Activated B cell treated with CpG ODN at 0.5 μM for 24 hours (primary cell): ENCODE measurements at regions of chr11 and their contacts with region 1.

Region 1: GRCh38 chr11:18698341-18699268 is at the start of gene TMEM86A:
- DNase-seq: peak; percentile 83
- ATAC-seq: peak; percentile 98
- H3K4me3 Mint-ChIP-seq: peak within 1 kb of the TSS; percentile 80
- H3K27ac Mint-ChIP-seq: no peak within 1 kb of the TSS
- H3K4me1 Mint-ChIP-seq: peaks cover 17% of the 10 kb centered on the region
- H3K27me3 Mint-ChIP-seq: peaks cover 5% of the 10 kb centered on the region
- CTCF ChIP-seq: no peak
- total RNA-seq, gene TMEM86A: 0.10 and 0.13 TPM in 2 replicates

Region 2: GRCh38 chr11:18329196-18329870 is 369.3 kb before region 1 on chr11:
- CTCF ChIA-PET with region 1: no interaction called
- POLR2A ChIA-PET with region 1: no interaction called
- intact Hi-C with region 1: no loop called
- DNase-seq: no peak
- ATAC-seq: peak; percentile 69
- H3K4me3 Mint-ChIP-seq: peak overlapping the region; percentile 4
- H3K27ac Mint-ChIP-seq: peak overlapping the region; percentile 82
- H3K4me1 Mint-ChIP-seq: peaks cover 54% of the 10 kb centered on the region
- H3K27me3 Mint-ChIP-seq: no peaks in the 10 kb centered on the region
- CTCF ChIP-seq: no peak

Region 3: GRCh38 chr11:18588297-18589252 is 110.0 kb before region 1 on chr11 and contains the start of gene UEVLD:
- CTCF ChIA-PET with region 1: no interaction called
- POLR2A ChIA-PET with region 1: no interaction called
- intact Hi-C with region 1: loop called (anchors 2 kb)
- DNase-seq: peak; percentile 65
- ATAC-seq: peak; percentile 73
- H3K4me3 Mint-ChIP-seq: no peak within 1 kb of the TSS
- H3K27ac Mint-ChIP-seq: no peak within 1 kb of the TSS
- H3K4me1 Mint-ChIP-seq: no peaks in the 10 kb centered on the region
- H3K27me3 Mint-ChIP-seq: no peaks in the 10 kb centered on the region
- CTCF ChIP-seq: no peak
- total RNA-seq, gene UEVLD: 12.9 and 18.0 TPM in 2 replicates

Region 4: DNA sequence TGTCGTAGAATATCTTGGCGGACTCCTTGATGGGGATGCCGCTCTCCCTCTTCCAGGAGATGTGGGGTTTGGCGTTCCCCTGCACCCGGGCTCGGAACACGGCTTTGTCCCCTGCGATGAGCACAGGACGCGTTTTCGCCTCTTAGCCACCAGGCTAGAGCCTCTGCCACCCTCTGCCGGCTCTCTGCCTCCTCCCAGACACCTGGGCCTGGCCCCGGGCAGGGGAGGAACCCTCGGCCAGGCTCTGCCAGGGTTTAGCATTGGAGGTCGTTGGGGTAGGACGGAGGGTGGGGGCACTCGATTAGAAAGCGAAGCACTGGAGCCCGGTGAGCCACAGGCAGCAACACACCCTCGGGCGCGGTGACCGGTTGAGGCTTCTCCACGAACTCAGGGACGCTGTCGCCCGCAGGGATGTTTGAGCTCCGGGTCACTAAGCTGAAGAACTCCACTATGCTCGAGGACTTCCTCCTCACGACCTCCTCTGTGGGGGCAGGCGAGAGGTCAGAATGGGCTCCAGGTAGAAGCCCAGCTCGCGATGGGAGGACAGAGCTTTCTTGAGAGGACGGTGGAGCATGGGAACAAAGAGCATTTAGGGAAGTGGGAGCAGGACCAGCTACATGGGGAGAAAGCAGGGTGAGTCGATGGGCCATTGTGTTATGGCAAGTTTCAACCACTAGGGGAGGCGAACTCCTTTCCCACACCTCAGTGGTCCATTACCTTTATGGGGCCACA is 23.1 kb after region 1 on chr11:
- CTCF ChIA-PET with region 1: interaction called, 16 read pairs
- POLR2A ChIA-PET with region 1: no interaction called
- intact Hi-C with region 1: loop called (anchors 1 kb)
- DNase-seq: peak; percentile 45
- ATAC-seq: peak; percentile 56
- H3K4me3 Mint-ChIP-seq: peak overlapping the region; percentile 92
- H3K27ac Mint-ChIP-seq: peak overlapping the region; percentile 46
- H3K4me1 Mint-ChIP-seq: peaks cover 12% of the 10 kb centered on the region
- H3K27me3 Mint-ChIP-seq: no peaks in the 10 kb centered on the region
- CTCF ChIP-seq: peak; percentile 39

Region 5: DNA sequence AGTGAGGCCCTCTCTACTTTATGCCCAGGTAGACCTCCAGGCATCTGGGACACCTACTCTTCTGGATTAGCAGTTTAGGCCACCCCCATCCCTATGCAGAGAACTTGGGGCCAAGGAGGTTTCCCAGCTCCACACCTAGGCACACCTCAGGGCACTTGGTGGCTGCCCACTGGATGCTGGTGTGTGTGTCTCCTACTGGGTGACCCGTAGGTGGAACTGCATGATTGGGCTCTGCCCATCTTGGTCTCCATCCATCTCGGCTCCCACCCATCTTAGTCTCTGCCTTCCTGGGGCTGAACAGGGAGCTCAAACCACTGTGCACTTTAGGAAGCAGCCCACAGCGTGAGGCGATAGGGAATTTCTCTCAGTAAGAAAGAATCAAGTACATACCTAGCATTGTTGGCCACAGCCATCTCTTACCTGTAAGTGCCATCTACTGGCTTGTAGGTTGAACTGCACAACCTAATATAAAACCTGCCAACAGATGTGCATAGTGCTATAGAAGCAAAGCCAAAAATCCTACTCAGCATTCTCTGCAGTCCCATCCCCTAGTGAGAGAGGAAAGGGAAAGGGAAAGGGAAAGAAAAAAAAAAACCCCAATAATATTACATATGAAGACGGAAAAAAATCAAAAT is 154.6 kb after region 1 on chr11:
- CTCF ChIA-PET with region 1: no interaction called
- POLR2A ChIA-PET with region 1: no interaction called
- intact Hi-C with region 1: no loop called
- DNase-seq: no peak
- ATAC-seq: no peak
- H3K4me3 Mint-ChIP-seq: no peak overlapping the region
- H3K27ac Mint-ChIP-seq: no peak overlapping the region
- H3K4me1 Mint-ChIP-seq: no peaks in the 10 kb centered on the region
- H3K27me3 Mint-ChIP-seq: peaks cover 25% of the 10 kb centered on the region
- CTCF ChIP-seq: no peak